MCF 10A (cell line): ENCODE measurements at regions of chr2 and their contacts with region 1.

Region 1: GRCh38 chr2:64644177-64645004 is 9.3 kb downstream of the SERTAD2 start:
- DNase-seq: peak; percentile 64
- H3K4me3 Mint-ChIP-seq: peak overlapping the region; percentile 78
- H3K27ac Mint-ChIP-seq: peak overlapping the region; percentile 96
- H3K4me1 Mint-ChIP-seq: peaks cover 32% of the 10 kb centered on the region
- H3K27me3 Mint-ChIP-seq: no peaks in the 10 kb centered on the region
- CTCF ChIP-seq: no peak

Region 2: DNA sequence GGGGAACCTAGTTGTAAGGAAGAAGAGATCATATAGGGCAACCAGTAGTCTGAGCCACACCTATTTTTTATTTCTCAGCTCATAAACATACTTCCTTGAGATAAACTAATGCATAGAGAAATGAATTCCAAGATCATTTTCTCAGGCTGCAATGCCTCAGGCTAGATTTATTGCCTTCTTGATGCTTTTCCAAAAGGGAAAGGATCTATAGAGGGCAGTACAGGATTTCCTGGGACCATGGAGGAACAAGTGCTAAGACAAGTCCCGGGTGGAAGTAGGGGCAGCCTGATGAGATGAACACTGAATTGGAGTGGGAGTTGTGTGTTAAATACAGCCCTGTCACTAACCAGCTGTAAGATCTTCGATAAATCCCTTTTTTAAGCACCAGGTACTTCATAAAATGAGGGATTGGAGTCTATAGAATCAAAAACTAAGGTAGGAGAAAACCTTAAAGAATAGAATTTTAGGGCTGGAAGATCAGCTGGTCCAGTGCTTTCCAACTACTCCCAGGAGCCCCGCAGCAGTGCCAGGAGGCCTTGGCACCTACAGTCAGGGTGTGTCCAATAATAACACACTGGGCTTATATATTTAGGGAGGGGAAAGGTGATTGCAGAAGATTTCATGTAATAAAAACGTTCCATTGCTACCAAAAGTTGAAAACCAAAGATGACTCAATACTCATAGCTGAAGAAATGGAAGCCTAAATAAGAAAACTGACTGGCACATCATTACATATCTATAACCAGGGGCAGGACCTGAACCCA is 48.8 kb before region 1 on chr2:
- CTCF ChIA-PET with region 1: interaction called, 20 read pairs
- POLR2A ChIA-PET with region 1: interaction called, 19 read pairs
- intact Hi-C with region 1: no loop called
- DNase-seq: peak; percentile 50
- H3K4me3 Mint-ChIP-seq: no peak overlapping the region
- H3K27ac Mint-ChIP-seq: peak overlapping the region; percentile 96
- H3K4me1 Mint-ChIP-seq: peaks cover 36% of the 10 kb centered on the region
- H3K27me3 Mint-ChIP-seq: no peaks in the 10 kb centered on the region
- CTCF ChIP-seq: no peak

Region 3: GRCh38 chr2:64767670-64768468 is 123.5 kb after region 1 on chr2:
- CTCF ChIA-PET with region 1: interaction called, 4 read pairs
- POLR2A ChIA-PET with region 1: interaction called, 10 read pairs
- intact Hi-C with region 1: loop called (anchors 2 kb)
- DNase-seq: peak; percentile 82
- H3K4me3 Mint-ChIP-seq: peak overlapping the region; percentile 74
- H3K27ac Mint-ChIP-seq: peak overlapping the region; percentile 87
- H3K4me1 Mint-ChIP-seq: peaks cover 31% of the 10 kb centered on the region
- H3K27me3 Mint-ChIP-seq: no peaks in the 10 kb centered on the region
- CTCF ChIP-seq: no peak

Region 4: GRCh38 chr2:64831134-64831976 is 187.0 kb after region 1 on chr2:
- CTCF ChIA-PET with region 1: interaction called, 10 read pairs
- POLR2A ChIA-PET with region 1: interaction called, 4 read pairs
- intact Hi-C with region 1: loop called (anchors 10 kb)
- DNase-seq: peak; percentile 98
- H3K4me3 Mint-ChIP-seq: peak overlapping the region; percentile 23
- H3K27ac Mint-ChIP-seq: peak overlapping the region; percentile 91
- H3K4me1 Mint-ChIP-seq: peaks cover 30% of the 10 kb centered on the region
- H3K27me3 Mint-ChIP-seq: no peaks in the 10 kb centered on the region
- CTCF ChIP-seq: peak; percentile 85

Region 5: DNA sequence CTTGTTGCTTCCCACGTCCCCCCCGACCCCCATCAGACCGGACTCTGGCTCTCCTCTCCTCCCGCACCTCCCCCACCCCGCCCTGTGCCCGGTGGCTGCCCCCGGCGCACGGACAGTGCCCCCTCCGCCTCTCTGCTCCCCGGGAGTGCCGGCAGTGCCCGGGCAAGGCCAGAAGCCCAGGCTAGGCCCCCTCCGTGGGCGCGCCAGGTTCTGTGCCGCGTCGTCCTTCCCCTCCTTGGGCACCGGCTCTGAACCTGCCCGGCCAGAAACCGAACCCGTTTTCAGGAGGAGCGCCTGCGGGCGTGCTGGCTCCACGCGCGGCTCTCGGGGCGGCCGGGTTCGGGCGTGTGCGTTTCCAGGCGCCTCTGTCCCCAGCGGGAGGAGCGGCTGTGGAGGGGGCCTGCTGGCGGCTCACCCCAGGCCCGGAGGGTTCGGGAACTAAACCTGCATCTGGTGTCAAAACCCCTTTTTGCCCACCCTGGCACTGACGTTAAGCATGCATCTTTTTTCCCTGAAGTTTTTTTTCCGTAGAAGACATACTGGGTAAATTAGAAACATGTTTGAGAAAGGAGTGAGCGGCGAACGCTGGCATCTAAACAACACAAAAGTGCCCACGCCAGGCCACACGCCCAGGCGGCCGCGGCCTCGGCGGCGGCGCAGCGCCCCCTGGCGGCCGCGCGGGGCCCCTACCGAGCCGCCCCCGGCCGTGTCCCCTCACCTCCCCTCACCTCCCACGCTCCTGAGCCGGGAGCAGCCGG is 220.9 kb after region 1 on chr2:
- CTCF ChIA-PET with region 1: interaction called, 21 read pairs
- POLR2A ChIA-PET with region 1: interaction called, 178 read pairs
- intact Hi-C with region 1: loop called (anchors 1 kb)
- DNase-seq: peak; percentile 68
- H3K4me3 Mint-ChIP-seq: peak overlapping the region; percentile 64
- H3K27ac Mint-ChIP-seq: no peak overlapping the region
- H3K4me1 Mint-ChIP-seq: peaks cover 7% of the 10 kb centered on the region
- H3K27me3 Mint-ChIP-seq: no peaks in the 10 kb centered on the region
- CTCF ChIP-seq: peak; percentile 86